Activated CD4-positive, alpha-beta memory T cell treated with anti-CD3 and anti-CD28 coated beads, Interleukin-2, amount 10 ng/mL, durations not matched to agents 7 days and 5 days (primary cell): ENCODE measurements at regions of chr1 and their contacts with region 1.

Region 1: GRCh38 chr1:223712194-223712849 is at the start of gene CAPN2:
- DNase-seq: peak; percentile 75
- H3K4me3 Mint-ChIP-seq: peak within 1 kb of the TSS; percentile 85
- H3K27ac Mint-ChIP-seq: peak within 1 kb of the TSS; percentile 95
- H3K4me1 Mint-ChIP-seq: peaks cover 57% of the 10 kb centered on the region
- H3K27me3 Mint-ChIP-seq: peaks cover 6% of the 10 kb centered on the region
- total RNA-seq, gene CAPN2: 263 TPM

Region 2: DNA sequence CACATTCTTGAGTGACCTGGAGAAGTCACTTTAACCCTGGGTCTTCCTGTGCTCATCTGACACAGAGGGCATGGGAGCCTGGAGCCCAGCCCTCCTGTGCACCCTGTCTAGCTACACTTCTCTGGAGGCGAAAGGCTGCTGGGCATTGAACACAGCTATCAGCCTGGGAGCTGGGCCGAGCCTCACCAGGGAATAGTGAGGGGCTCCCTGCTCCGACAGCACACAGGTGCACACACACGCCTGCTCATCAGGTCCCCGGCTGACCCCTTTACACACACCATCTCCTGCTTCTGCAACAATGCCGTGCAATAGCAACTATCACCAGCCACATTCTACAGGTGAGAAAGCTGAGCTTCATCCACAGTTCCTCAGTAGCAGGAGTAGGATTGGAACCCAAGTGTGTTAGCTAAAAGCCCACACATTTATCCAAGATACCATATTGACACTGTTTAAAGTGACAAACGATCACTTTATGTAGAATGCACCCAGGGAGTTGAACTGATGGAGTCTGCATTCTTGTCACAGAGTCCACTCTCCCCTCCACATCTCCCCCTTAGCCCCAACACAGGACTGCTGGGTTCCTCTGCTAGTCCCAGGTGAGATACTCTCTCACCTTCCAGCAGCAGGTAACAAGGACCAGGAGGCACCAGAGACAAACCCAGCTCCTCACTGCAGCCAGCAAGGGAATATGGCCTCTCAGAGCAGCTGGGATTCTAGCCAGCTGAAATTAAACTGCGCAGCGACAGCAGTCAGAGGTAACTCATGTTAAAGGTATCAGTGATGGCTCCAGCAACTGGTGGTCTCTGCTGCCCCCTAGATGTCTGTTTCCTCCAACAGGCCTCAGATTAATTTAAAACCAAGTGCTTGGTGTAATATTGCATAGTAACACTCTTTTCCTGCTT is 28.5 kb before region 1 on chr1:
- CTCF ChIA-PET with region 1: no interaction called
- POLR2A ChIA-PET with region 1: no interaction called
- DNase-seq: peak; percentile 48
- H3K4me3 Mint-ChIP-seq: no peak overlapping the region
- H3K27ac Mint-ChIP-seq: no peak overlapping the region
- H3K4me1 Mint-ChIP-seq: peaks cover under 1% of the 10 kb centered on the region
- H3K27me3 Mint-ChIP-seq: peaks cover 25% of the 10 kb centered on the region

Region 3: DNA sequence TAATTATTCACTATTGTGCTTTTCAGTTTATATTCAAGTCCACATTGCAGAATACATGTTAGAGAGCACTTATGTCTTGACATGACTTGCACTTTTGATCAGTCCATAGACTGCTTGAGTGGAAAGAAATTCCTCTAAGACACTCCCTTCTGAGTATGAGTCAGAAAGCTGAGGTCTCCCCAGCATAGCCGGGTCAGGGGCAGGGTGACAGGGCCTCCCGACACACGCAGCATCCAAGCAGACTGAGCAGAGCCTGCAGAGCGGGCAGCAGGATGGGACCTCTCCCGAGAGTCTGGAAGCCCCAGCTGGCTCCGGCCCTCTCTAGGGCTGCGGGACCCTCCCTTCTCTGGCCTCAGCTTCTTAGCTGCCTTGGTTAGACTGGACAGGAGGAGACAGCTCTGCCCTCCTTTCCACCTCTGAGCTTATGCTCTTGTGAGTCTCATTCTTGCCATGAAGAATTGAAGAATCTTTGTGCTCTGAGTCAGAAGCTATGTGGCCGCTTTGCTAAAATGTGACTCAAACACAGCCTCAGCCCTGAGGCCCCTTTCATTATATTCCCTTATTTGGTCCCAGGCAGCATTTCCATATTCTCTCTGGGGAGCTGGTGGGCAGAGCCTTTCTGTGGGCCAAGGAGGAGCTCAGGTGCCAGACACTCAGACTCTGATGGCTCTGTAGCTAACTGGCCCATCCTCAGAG is 11.2 kb before region 1 on chr1:
- CTCF ChIA-PET with region 1: interaction called, 35 read pairs
- POLR2A ChIA-PET with region 1: interaction called, 22 read pairs
- DNase-seq: no peak
- H3K4me3 Mint-ChIP-seq: no peak overlapping the region
- H3K27ac Mint-ChIP-seq: no peak overlapping the region
- H3K4me1 Mint-ChIP-seq: peaks cover 27% of the 10 kb centered on the region
- H3K27me3 Mint-ChIP-seq: no peaks in the 10 kb centered on the region

Region 4: GRCh38 chr1:223726380-223727001 is 14.2 kb after region 1 on chr1:
- CTCF ChIA-PET with region 1: interaction called, 18 read pairs
- POLR2A ChIA-PET with region 1: interaction called, 59 read pairs
- DNase-seq: peak; percentile 88
- H3K4me3 Mint-ChIP-seq: peak overlapping the region; percentile 69
- H3K27ac Mint-ChIP-seq: peak overlapping the region; percentile 89
- H3K4me1 Mint-ChIP-seq: peaks cover 81% of the 10 kb centered on the region
- H3K27me3 Mint-ChIP-seq: no peaks in the 10 kb centered on the region